ENCODE measurements at regions of chr5 and their contacts with region 1.

Region 1: DNA sequence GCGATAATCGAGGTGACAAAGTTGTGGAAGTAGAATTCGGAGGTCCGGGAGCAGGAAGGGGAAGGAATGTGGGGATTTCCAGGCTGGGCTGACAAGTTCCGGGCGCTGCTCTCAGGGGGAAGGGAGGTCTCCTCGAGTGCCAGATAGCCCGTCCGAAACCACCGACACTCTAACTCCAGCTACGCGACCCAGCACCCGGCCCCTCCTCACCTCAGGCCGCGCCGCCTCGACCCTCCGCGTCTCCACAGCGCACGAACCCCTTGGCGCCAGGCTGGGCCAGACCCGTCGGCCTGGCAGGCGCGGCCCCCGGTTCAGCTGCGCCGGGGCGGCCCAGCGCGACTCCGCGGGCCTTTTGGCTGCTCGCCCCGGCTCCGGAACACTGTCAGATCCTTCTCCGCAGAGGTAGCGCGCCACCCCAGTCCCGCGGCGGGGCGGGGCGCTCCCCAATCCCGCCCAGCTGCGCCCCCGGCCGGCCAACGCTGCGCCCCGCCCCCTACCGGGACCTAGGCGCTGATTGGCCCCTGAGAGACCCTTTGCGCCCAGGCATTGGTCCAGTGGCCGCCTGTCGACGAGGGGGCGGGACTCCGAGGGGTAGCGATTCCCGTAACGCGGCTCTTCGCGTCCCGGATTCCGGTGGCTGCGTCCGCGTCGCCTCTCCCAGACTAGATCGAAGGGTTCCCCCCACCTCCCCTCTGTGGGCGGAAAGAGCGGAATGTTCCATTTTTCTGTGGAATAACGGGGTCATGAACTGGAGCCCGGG is at the start of gene IL6ST:
- DNase-seq: peak; percentile 92 to 98 (median 96)
- ATAC-seq: peak; percentile 87 to 89
- H3K4me3 Mint-ChIP-seq: peak within 1 kb of the TSS; percentile 89 to 100 (median 99)
- H3K27ac Mint-ChIP-seq: peak within 1 kb of the TSS; percentile 95 to 100 (median 98)
- H3K4me1 Mint-ChIP-seq: peaks cover 35 to 62% (median 55%) of the 10 kb centered on the region in 4 donors
- H3K27me3 Mint-ChIP-seq: no peaks in the 10 kb centered on the region
- polyA plus RNA-seq, gene IL6ST: 39.5 to 64.7 (median 54.9) TPM

Region 2: DNA sequence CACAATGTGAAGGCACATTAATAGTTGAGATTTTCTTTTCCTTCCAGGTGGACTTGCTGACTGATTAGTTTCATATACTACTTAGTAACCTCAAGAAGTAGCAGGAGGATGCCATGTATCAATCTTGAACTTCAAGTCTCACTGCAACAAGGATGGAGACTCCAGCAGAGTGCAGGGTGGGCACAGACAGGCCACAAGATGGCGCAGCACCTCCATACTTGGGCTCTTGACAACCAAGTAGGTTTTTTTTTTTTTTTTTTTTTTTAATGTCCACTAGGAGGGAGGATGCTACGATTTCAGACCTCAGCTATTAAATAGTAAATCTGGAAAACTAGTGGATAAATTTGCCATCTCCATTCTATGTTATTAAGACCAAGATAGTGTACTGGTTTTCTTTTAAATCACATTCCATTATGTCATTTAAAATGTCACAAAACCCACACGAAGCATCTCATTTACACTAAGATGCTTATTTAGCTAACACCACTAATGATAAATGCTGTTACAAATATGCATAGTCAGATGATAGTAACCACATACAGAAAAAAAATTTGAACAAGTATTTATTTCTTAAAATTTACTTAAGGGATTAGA is 58.6 kb before region 1 on chr5:
- POLR2A ChIA-PET with region 1: no interaction called
- DNase-seq: peak; percentile 59 to 87 (median 70)
- ATAC-seq: peak; percentile 85 to 90
- H3K4me3 Mint-ChIP-seq: no peak overlapping the region
- H3K27ac Mint-ChIP-seq: peak overlapping the region in 6 of 10 donors; percentile 8 to 74 (median 49)
- H3K4me1 Mint-ChIP-seq: peaks cover 5 to 10% (median 7%) of the 10 kb centered on the region in 4 donors
- H3K27me3 Mint-ChIP-seq: no peaks in the 10 kb centered on the region

Region 3: GRCh38 chr5:56019306-56020272 is 24.8 kb after region 1 on chr5:
- POLR2A ChIA-PET with region 1: interaction called, 12 read pairs
- DNase-seq: peak in 2 of 10 donors; percentile 27 to 35
- ATAC-seq: peak; percentile 42 to 47
- H3K4me3 Mint-ChIP-seq: peak overlapping the region; percentile 0 to 71 (median 14)
- H3K27ac Mint-ChIP-seq: peak overlapping the region in 9 of 10 donors; percentile 0 to 79 (median 58)
- H3K4me1 Mint-ChIP-seq: peaks cover 5 to 34% (median 22%) of the 10 kb centered on the region in 4 donors
- H3K27me3 Mint-ChIP-seq: no peaks in the 10 kb centered on the region

Region 4: GRCh38 chr5:56056875-56057274 is 62.1 kb after region 1 on chr5:
- POLR2A ChIA-PET with region 1: interaction called, 66 read pairs
- DNase-seq: no peak
- ATAC-seq: no peak
- H3K4me3 Mint-ChIP-seq: peak overlapping the region in 8 of 10 donors; percentile 4 to 72 (median 56)
- H3K27ac Mint-ChIP-seq: peak overlapping the region; percentile 72 to 96 (median 91)
- H3K4me1 Mint-ChIP-seq: peaks cover 40 to 88% (median 68%) of the 10 kb centered on the region in 4 donors
- H3K27me3 Mint-ChIP-seq: no peaks in the 10 kb centered on the region

Region 5: DNA sequence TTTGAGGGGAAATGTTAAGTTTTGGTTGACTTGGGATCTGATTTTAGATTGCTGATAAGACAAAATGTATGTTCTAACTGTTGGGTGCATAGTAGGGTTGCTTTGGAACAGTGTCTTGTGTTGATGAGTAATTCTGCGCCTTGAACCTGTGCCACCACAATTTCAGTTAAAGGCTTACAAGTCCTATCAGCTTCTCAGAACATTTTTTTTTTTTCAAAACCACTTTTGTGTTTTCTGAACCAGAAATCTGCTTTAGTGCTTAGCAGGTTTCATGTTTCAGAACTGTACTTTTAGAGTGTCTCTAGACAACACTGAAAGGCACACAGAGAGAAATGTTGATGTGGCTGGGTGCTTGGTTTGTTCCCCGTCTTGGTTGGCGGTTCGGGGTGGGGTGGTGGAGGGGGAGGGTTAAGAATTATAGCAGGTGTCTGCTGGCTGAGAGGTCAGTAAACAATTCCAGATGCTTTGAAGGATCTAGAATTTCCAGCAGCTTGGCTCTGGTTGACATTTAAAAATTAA is 153.8 kb after region 1 on chr5:
- POLR2A ChIA-PET with region 1: interaction called, 20 read pairs
- DNase-seq: peak in 7 of 10 donors; percentile 26 to 71 (median 49)
- ATAC-seq: peak; percentile 86
- H3K4me3 Mint-ChIP-seq: peak overlapping the region in 8 of 10 donors; percentile 5 to 70 (median 56)
- H3K27ac Mint-ChIP-seq: peak overlapping the region; percentile 59 to 93 (median 84)
- H3K4me1 Mint-ChIP-seq: peaks cover 31 to 70% (median 54%) of the 10 kb centered on the region in 4 donors
- H3K27me3 Mint-ChIP-seq: no peaks in the 10 kb centered on the region

Region 6: GRCh38 chr5:57190593-57190992 is 1195.8 kb after region 1 on chr5:
- POLR2A ChIA-PET with region 1: interaction called, 10 read pairs
- DNase-seq: no peak
- ATAC-seq: no peak
- H3K4me3 Mint-ChIP-seq: peak overlapping the region in 1 of 10 donors; percentile 53
- H3K27ac Mint-ChIP-seq: peak overlapping the region in 5 of 10 donors; percentile 5 to 87 (median 62)
- H3K4me1 Mint-ChIP-seq: peaks cover 33 to 94% (median 88%) of the 10 kb centered on the region in 4 donors
- H3K27me3 Mint-ChIP-seq: no peaks in the 10 kb centered on the region